Right cardiac atrium (tissue), 5 donors: ENCODE measurements at regions of chr7 and their contacts with region 1.

Region 1: DNA sequence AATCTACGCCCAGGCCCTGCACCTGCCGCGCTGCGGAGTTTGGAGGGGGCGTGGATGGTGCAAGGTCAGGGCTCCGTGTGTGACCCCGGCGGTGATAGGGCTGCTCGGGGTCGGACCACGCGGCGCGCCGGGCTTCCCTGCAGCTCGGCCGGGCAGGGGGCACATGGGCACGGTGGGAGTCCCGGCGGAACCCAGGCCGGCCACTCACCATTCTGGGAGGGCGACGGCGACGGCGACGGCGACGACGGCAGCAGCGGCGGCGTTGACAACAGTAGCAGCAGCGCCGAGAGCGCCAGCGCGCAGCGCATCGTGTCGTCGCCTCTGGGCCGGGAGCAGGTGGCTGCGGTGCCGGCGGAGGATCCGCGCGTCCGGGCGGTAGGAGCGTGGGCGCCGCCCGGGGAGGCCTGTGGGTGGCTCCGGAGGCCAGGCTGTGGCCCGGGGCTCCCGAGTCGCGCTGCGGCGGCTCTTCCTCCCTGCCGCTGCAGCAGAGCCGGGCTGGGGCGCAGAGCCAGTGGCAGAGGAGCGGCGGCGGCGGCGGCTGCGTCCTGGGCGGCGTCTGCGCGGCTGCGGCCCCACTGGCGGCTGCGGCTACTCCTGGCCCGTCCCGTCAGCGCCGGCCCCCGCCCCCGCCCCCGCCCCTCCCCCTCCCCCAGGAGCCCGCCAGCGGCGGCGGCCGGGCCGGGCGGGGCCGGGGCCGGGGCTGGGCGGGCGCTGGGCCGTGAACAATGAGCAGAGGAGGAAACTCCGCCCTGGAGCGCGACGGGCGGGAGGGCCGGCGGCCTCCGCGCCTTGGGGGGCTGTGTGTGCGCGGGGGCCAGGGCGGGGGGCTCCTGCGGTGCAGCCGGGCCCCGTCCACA is at the start of gene PODXL:
- DNase-seq: peak; percentile 84 to 94 (median 94)
- ATAC-seq: peak; percentile 80 to 84
- H3K4me3 ChIP-seq: peak within 1 kb of the TSS; percentile 35
- H3K27ac ChIP-seq: peak within 1 kb of the TSS; percentile 43
- H3K4me1 ChIP-seq: peaks cover 10% of the 10 kb centered on the region
- H3K27me3 ChIP-seq: no peaks in the 10 kb centered on the region
- total RNA-seq, gene PODXL: 60.7 to 81.1 (median 63.9) TPM

Region 2: DNA sequence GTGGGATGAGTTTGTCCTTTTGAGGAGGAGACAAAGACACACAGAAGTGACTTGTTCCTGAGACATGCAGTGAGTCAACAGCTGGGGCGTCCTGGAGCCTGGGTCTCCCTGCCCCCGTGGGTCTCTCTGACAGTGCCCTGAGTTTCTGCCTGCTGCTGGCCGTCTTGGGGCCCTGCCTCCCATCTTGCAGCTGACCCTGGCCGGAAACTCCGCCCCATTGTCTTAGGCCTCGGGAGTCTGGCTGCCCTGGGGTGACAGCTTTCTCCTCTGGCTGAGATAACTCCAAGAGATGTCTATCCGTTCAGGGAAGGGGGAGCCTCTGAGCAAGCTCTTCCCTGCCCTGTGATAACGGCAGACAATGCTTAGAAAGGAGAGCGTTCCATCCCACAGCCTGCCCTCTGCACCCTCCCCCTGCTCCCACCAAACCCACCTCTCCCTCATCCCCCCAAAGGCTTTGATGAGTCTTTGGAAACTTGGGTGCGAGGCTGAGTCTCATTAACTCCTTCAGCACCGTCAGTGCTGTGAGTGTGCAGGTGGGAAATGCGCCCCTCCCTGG is 69.6 kb after region 1 on chr7:
- intact Hi-C with region 1: loop called in 2 of 4 experiments (anchors 5 to 10 kb)
- DNase-seq: peak; percentile 75 to 84 (median 78)
- ATAC-seq: peak; percentile 6 to 68
- H3K4me3 ChIP-seq: no peak overlapping the region
- H3K27ac ChIP-seq: peak overlapping the region; percentile 53
- H3K4me1 ChIP-seq: peaks cover 27% of the 10 kb centered on the region
- H3K27me3 ChIP-seq: no peaks in the 10 kb centered on the region